ENCODE measurements at regions of chr12 and their contacts with region 1.

Region 1: GRCh38 chr12:112992541-112993398 is 14.5 kb downstream of the OAS2 start:
- H3K4me3 Mint-ChIP-seq: no peak overlapping the region
- H3K27ac Mint-ChIP-seq: no peak overlapping the region
- H3K4me1 Mint-ChIP-seq: peaks cover 12% of the 10 kb centered on the region
- H3K27me3 Mint-ChIP-seq: no peaks in the 10 kb centered on the region

Region 2: GRCh38 chr12:113030875-113031525 is 38.2 kb after region 1 on chr12:
- intact Hi-C with region 1: loop called (anchors 5 kb)
- H3K4me3 Mint-ChIP-seq: no peak overlapping the region
- H3K27ac Mint-ChIP-seq: no peak overlapping the region
- H3K4me1 Mint-ChIP-seq: peaks cover 6% of the 10 kb centered on the region
- H3K27me3 Mint-ChIP-seq: peaks cover 10% of the 10 kb centered on the region

Region 3: GRCh38 chr12:113098446-113098896 is 105.7 kb after region 1 on chr12:
- intact Hi-C with region 1: loop called (anchors 10 kb)
- H3K4me3 Mint-ChIP-seq: no peak overlapping the region
- H3K27ac Mint-ChIP-seq: no peak overlapping the region
- H3K4me1 Mint-ChIP-seq: peaks cover 10% of the 10 kb centered on the region
- H3K27me3 Mint-ChIP-seq: peaks cover 25% of the 10 kb centered on the region

Region 4: GRCh38 chr12:113174461-113175384 is 182.0 kb after region 1 on chr12:
- intact Hi-C with region 1: loop called (anchors 5 kb)
- H3K4me3 Mint-ChIP-seq: no peak overlapping the region
- H3K27ac Mint-ChIP-seq: peak overlapping the region; percentile 7
- H3K4me1 Mint-ChIP-seq: peaks cover 9% of the 10 kb centered on the region
- H3K27me3 Mint-ChIP-seq: no peaks in the 10 kb centered on the region